HCT116 (cell line): ENCODE measurements at regions of chr3 and their contacts with region 1.

Region 1: GRCh38 chr3:37967260-37967881 is 23.2 kb upstream of the VILL start:
- DNase-seq: peak; percentile 28
- ATAC-seq: peak; percentile 97
- H3K4me3 ChIP-seq: no peak overlapping the region
- H3K27ac ChIP-seq: no peak overlapping the region
- H3K4me1 ChIP-seq: no peaks in the 10 kb centered on the region
- H3K27me3 ChIP-seq: no peaks in the 10 kb centered on the region
- CTCF ChIP-seq: peak; percentile 83 to 96 (median 88)
- POLR2A ChIP-seq: no peak
- RAD21 ChIP-seq: peak; percentile 86

Region 2: GRCh38 chr3:37979541-37980461 is 12.4 kb after region 1 on chr3:
- CTCF ChIA-PET with region 1: interaction called, 10 read pairs
- POLR2A ChIA-PET with region 1: no interaction called
- RAD21 ChIA-PET with region 1: no interaction called
- intact Hi-C with region 1: no loop called
- DNase-seq: no peak
- ATAC-seq: no peak
- H3K4me3 ChIP-seq: no peak overlapping the region
- H3K27ac ChIP-seq: no peak overlapping the region
- H3K4me1 ChIP-seq: no peaks in the 10 kb centered on the region
- H3K27me3 ChIP-seq: no peaks in the 10 kb centered on the region
- CTCF ChIP-seq: no peak
- POLR2A ChIP-seq: no peak
- RAD21 ChIP-seq: no peak